Activated CD4-positive, alpha-beta memory T cell treated with anti-CD3 and anti-CD28 coated beads for 36 hours (primary cell): ENCODE measurements at regions of chr9 and their contacts with region 1.

Region 1: DNA sequence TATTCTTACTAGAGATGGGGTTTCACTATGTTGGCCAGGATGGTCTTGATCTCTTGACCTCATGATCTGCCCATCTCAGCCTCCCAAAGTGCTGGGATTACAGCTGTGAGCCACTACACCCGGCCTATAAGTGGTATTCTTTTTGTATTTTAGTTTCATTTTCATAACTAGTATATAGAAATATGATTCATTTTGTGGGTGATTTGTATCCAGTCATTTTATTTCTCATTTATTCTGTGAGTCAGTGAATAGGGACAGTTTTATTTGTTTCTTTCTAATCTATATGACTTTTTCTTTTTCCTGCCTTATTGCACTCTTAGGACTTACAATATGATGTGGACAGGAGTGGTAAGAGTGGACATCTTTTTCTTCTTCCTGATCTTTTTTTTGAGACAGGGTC is 112.9 kb downstream of the AOPEP start:
- DNase-seq: peak; percentile 26
- H3K4me3 Mint-ChIP-seq: no peak overlapping the region
- H3K27ac Mint-ChIP-seq: peak overlapping the region; percentile 53
- H3K4me1 Mint-ChIP-seq: peaks cover 18% of the 10 kb centered on the region
- H3K27me3 Mint-ChIP-seq: no peaks in the 10 kb centered on the region

Region 2: GRCh38 chr9:94472806-94473360 is 366.5 kb before region 1 on chr9:
- CTCF ChIA-PET with region 1: no interaction called
- POLR2A ChIA-PET with region 1: no interaction called
- intact Hi-C with region 1: no loop called
- DNase-seq: no peak
- H3K4me3 Mint-ChIP-seq: no peak overlapping the region
- H3K27ac Mint-ChIP-seq: no peak overlapping the region
- H3K4me1 Mint-ChIP-seq: no peaks in the 10 kb centered on the region
- H3K27me3 Mint-ChIP-seq: peaks cover 12% of the 10 kb centered on the region

Region 3: GRCh38 chr9:94767331-94768072 is 71.9 kb before region 1 on chr9:
- CTCF ChIA-PET with region 1: no interaction called
- POLR2A ChIA-PET with region 1: interaction called, 3 read pairs
- intact Hi-C with region 1: loop called (anchors 1 kb)
- DNase-seq: no peak
- H3K4me3 Mint-ChIP-seq: no peak overlapping the region
- H3K27ac Mint-ChIP-seq: no peak overlapping the region
- H3K4me1 Mint-ChIP-seq: peaks cover 21% of the 10 kb centered on the region
- H3K27me3 Mint-ChIP-seq: no peaks in the 10 kb centered on the region

Region 4: GRCh38 chr9:94802793-94803192 is 36.6 kb before region 1 on chr9:
- CTCF ChIA-PET with region 1: no interaction called
- POLR2A ChIA-PET with region 1: no interaction called
- intact Hi-C with region 1: loop called (anchors 1 kb)
- DNase-seq: peak; percentile 61
- H3K4me3 Mint-ChIP-seq: no peak overlapping the region
- H3K27ac Mint-ChIP-seq: no peak overlapping the region
- H3K4me1 Mint-ChIP-seq: peaks cover 18% of the 10 kb centered on the region
- H3K27me3 Mint-ChIP-seq: no peaks in the 10 kb centered on the region

Region 5: GRCh38 chr9:94860968-94861871 is 21.8 kb after region 1 on chr9:
- CTCF ChIA-PET with region 1: no interaction called
- POLR2A ChIA-PET with region 1: no interaction called
- intact Hi-C with region 1: loop called (anchors 1 kb)
- DNase-seq: peak; percentile 79
- H3K4me3 Mint-ChIP-seq: peak overlapping the region; percentile 25
- H3K27ac Mint-ChIP-seq: peak overlapping the region; percentile 76
- H3K4me1 Mint-ChIP-seq: peaks cover 44% of the 10 kb centered on the region
- H3K27me3 Mint-ChIP-seq: no peaks in the 10 kb centered on the region